SK-N-SH (cell line): ENCODE measurements at regions of chr17 and their contacts with region 1.

Region 1: GRCh38 chr17:59440784-59441441 is 109.5 kb downstream of the YPEL2 start:
- DNase-seq: peak; percentile 82
- H3K4me3 ChIP-seq: no peak overlapping the region
- H3K27ac ChIP-seq: no peak overlapping the region
- H3K4me1 ChIP-seq: peaks cover 0 to 4% of the 10 kb centered on the region in 2 experiments; a peak in 1 of 4 replicates
- H3K27me3 ChIP-seq: no peaks in the 10 kb centered on the region
- CTCF ChIP-seq: peak; percentile 99
- EP300 ChIP-seq: no peak
- RAD21 ChIP-seq: peak; percentile 100

Region 2: DNA sequence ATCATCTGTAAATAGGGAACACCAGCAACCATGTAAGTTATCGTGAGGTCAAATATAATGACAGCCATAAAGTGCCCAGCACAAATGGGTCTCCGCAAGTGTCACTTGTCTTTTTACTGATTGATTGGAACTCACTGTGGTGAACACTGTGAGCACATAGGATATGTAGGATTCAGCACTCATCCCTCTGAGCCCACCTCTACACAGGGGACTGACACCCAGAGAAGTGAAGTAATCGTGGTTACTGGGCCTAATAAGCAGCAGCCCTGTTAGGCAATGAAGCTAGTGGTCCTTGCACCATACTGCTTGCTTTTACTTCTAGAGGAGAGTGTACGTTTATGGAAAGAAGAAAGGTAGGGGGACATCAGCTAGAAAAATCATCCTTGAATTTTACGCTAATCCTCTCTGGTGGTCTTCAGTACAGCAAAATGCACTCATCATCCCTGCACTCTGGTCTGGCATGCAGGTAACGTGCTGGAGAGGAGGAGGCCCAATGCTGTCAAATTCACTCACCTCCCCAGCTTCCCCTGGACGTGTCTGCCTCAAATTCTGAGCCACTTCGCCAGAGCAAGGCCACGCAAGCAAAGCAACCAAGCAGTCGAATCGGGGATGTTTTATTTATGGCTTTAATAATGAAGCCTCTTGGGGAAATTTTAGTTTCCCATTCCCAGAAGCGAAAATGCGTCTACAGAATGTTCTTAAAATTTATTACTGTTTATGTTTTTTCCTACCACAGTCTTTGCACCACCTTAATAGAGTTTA is 34.8 kb before region 1 on chr17:
- CTCF ChIA-PET with region 1: interaction called, 38 read pairs
- POLR2A ChIA-PET with region 1: no interaction called
- DNase-seq: no peak
- H3K4me3 ChIP-seq: no peak overlapping the region
- H3K27ac ChIP-seq: peak overlapping the region; percentile 85 to 88
- H3K4me1 ChIP-seq: peaks cover 9 to 36% of the 10 kb centered on the region in 2 experiments; a peak in 2 of 4 replicates
- H3K27me3 ChIP-seq: no peaks in the 10 kb centered on the region
- CTCF ChIP-seq: no peak
- EP300 ChIP-seq: no peak
- RAD21 ChIP-seq: no peak

Region 3: DNA sequence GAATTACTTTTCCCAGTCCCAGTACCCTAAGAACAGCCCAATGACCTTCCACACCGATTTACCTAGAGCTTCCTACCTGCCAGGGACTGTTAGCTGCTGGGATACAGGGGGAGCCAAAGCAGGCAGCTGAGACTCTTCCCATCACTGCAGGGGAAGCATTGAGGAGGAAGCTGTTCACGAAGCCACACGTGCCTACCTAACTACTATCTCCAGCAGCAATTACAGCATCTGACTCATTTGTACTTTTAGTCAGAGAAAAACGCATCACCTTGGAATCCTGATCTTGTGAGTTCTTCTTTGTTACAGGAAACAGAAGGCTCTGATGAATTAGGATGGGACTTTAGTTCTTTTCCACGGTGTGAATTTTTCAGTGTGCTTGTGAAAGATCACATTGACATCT is 10.8 kb after region 1 on chr17:
- CTCF ChIA-PET with region 1: interaction called, 18 read pairs
- POLR2A ChIA-PET with region 1: no interaction called
- DNase-seq: no peak
- H3K4me3 ChIP-seq: no peak overlapping the region
- H3K27ac ChIP-seq: no peak overlapping the region
- H3K4me1 ChIP-seq: peaks cover 0 to 10% of the 10 kb centered on the region in 2 experiments; a peak in 1 of 4 replicates
- H3K27me3 ChIP-seq: no peaks in the 10 kb centered on the region
- CTCF ChIP-seq: 0 out of 2 replicates have a peak, but pooled peaks have one; percentile 13
- EP300 ChIP-seq: no peak
- RAD21 ChIP-seq: no peak

Region 4: DNA sequence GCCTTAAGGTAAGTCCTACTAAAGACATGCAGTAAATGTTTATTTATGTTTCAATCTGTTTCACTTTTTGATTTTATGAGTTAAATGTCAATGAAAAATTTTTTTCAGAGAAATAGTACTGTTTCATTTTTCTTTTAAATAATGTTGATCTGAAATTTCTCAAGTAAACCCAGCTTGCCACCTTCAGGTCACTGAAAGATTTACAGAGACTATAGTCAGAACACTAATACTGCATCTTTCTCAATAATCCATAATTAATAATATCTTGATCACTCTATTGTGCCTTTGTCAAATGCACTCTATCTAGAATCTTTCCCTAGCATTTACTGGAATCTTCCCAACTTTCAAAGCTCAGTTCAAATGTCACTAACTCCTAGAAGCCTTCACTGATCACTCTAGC is 118.1 kb after region 1 on chr17:
- CTCF ChIA-PET with region 1: interaction called, 22 read pairs
- POLR2A ChIA-PET with region 1: no interaction called
- DNase-seq: peak; percentile 42
- H3K4me3 ChIP-seq: no peak overlapping the region
- H3K27ac ChIP-seq: no peak overlapping the region
- H3K4me1 ChIP-seq: no peaks in the 10 kb centered on the region
- H3K27me3 ChIP-seq: no peaks in the 10 kb centered on the region
- CTCF ChIP-seq: peak; percentile 69
- EP300 ChIP-seq: no peak
- RAD21 ChIP-seq: peak; percentile 86

Region 5: GRCh38 chr17:59753522-59754467 is 312.9 kb after region 1 on chr17:
- CTCF ChIA-PET with region 1: no interaction called
- POLR2A ChIA-PET with region 1: no interaction called
- DNase-seq: peak; percentile 78
- H3K4me3 ChIP-seq: peak overlapping the region in 1 of 2 experiments; percentile 40; a peak in 1 of 4 replicates
- H3K27ac ChIP-seq: peak overlapping the region; percentile 91 to 99
- H3K4me1 ChIP-seq: peaks cover 0 to 40% of the 10 kb centered on the region in 2 experiments; a peak in 3 of 4 replicates
- H3K27me3 ChIP-seq: no peaks in the 10 kb centered on the region
- CTCF ChIP-seq: peak; percentile 92
- EP300 ChIP-seq: no peak
- RAD21 ChIP-seq: peak; percentile 98